ENCODE measurements at regions of chr6 and their contacts with region 1.

Region 1: GRCh38 chr6:76774781-76775384 is 688.4 kb downstream of the HTR1B start:
- DNase-seq: no peak
- H3K4me3 ChIP-seq: no peak overlapping the region
- H3K27ac ChIP-seq: no peak overlapping the region
- H3K4me1 ChIP-seq: peaks cover 8% of the 10 kb centered on the region
- H3K27me3 ChIP-seq: no peaks in the 10 kb centered on the region
- CTCF ChIP-seq: no peak

Region 2: DNA sequence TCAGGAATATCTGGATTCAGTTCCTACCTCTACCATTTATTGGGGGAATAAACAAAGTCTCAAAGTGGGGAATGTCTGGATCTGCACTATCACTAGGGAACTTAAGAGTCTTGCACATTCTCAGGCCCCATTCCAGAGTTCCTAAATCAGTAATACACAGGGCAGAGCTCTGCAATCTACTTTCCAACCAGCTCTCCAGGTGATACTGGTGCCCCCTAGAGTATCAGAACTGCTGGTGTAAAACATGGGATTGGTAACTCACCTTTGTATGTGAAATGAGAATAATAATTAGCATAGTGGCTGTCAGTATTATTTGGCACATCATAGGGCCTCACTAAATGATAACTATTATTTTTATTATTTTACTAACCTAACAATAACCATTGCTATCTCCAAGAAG is 423.6 kb before region 1 on chr6:
- CTCF ChIA-PET with region 1: no interaction called
- dilution Hi-C with region 1: no loop called
- in situ Hi-C with region 1: no loop called
- intact Hi-C with region 1: no loop called
- DNase-seq: peak; percentile 6
- H3K4me3 ChIP-seq: no peak overlapping the region
- H3K27ac ChIP-seq: no peak overlapping the region
- H3K4me1 ChIP-seq: no peaks in the 10 kb centered on the region
- H3K27me3 ChIP-seq: no peaks in the 10 kb centered on the region
- CTCF ChIP-seq: peak in 1 of 2 donors; percentile 29

Region 3: GRCh38 chr6:76706631-76707030 is 68.3 kb before region 1 on chr6:
- CTCF ChIA-PET with region 1: no interaction called
- dilution Hi-C with region 1: no loop called
- in situ Hi-C with region 1: no loop called
- intact Hi-C with region 1: loop called (anchors 5 kb)
- DNase-seq: no peak
- H3K4me3 ChIP-seq: no peak overlapping the region
- H3K27ac ChIP-seq: no peak overlapping the region
- H3K4me1 ChIP-seq: peaks cover 6% of the 10 kb centered on the region
- H3K27me3 ChIP-seq: no peaks in the 10 kb centered on the region
- CTCF ChIP-seq: no peak